ENCODE measurements at regions of chr11 and their contacts with region 1.

Region 1: GRCh38 chr11:8964324-8965320 is at the start of gene TMEM9B:
- DNase-seq: peak; percentile 88
- H3K4me3 Mint-ChIP-seq: peak within 1 kb of the TSS; percentile 88
- H3K27ac Mint-ChIP-seq: peak within 1 kb of the TSS; percentile 91
- H3K4me1 Mint-ChIP-seq: peaks cover 32% of the 10 kb centered on the region
- H3K27me3 Mint-ChIP-seq: no peaks in the 10 kb centered on the region
- total RNA-seq, gene TMEM9B: 34.2 to 34.8 TPM

Region 2: DNA sequence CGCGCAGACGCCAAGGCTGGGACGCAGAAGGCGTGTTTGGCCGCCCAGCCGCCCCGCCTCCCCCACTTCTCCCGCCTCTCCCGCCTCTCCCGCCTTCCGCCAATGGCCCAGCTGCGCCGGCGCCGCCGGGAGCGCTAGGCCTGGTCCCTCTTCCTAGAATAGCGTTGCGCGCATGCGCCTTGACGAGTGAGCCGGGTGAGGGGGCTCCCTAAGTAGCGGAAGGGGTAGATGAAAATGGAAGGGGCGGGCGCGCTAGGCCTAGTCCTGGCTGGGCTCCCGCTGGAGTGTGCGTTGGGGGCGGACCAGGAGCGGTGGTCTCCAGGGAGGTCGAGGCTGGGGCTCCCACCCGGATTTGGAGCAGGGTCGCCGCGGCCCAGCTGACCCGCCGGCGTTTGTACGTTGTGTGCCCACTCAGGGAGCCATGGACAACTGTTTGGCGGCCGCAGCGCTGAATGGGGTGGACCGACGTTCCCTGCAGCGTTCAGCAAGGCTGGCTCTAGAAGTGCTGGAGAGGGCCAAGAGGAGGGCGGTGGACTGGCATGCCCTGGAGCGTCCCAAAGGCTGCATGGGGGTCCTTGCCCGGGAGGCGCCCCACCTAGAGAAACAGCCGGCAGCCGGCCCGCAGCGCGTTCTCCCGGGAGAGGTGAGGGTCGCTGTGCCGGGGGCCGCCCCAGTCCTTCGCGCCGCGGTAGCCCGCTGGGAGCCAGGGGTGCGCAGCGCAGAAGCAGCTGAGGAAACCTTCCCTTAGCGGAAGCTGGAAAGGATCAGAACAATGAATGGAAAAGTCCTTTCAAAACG is 53.4 kb before region 1 on chr11 and contains the start of gene AKIP1:
- CTCF ChIA-PET with region 1: interaction called, 119 read pairs
- POLR2A ChIA-PET with region 1: interaction called, 20 read pairs
- DNase-seq: peak; percentile 84
- H3K4me3 Mint-ChIP-seq: peak within 1 kb of the TSS; percentile 94
- H3K27ac Mint-ChIP-seq: peak within 1 kb of the TSS; percentile 84
- H3K4me1 Mint-ChIP-seq: peaks cover 51% of the 10 kb centered on the region
- H3K27me3 Mint-ChIP-seq: peaks cover 6% of the 10 kb centered on the region
- total RNA-seq, gene AKIP1: 36.0 to 38.1 TPM

Region 3: GRCh38 chr11:8948886-8949285 is 15.7 kb before region 1 on chr11:
- CTCF ChIA-PET with region 1: interaction called, 14 read pairs
- POLR2A ChIA-PET with region 1: interaction called, 5 read pairs
- DNase-seq: no peak
- H3K4me3 Mint-ChIP-seq: no peak overlapping the region
- H3K27ac Mint-ChIP-seq: no peak overlapping the region
- H3K4me1 Mint-ChIP-seq: peaks cover 7% of the 10 kb centered on the region
- H3K27me3 Mint-ChIP-seq: peaks cover 3% of the 10 kb centered on the region

Region 4: DNA sequence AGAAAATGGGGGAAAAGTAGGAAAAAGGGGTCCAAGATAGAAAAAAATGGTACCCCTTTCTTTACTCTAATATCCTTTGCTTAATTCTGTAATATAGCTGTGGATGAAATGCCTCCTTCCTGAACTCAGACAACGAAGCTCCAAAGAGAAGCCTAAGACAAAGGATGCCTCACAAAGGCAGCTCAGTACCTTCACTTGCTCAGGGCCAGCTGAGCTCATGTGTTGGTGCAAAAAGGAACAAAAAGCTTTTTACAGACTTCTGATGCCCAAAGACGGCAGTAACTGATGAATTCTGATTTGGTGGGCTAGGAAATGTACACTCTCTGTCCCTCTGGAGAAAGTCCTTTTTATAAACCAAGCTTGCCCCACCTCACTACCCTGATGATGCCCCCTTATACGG is 223.0 kb after region 1 on chr11:
- CTCF ChIA-PET with region 1: no interaction called
- POLR2A ChIA-PET with region 1: no interaction called
- DNase-seq: no peak
- H3K4me3 Mint-ChIP-seq: no peak overlapping the region
- H3K27ac Mint-ChIP-seq: no peak overlapping the region
- H3K4me1 Mint-ChIP-seq: no peaks in the 10 kb centered on the region
- H3K27me3 Mint-ChIP-seq: no peaks in the 10 kb centered on the region

Measured in activated CD4-positive, alpha-beta memory T cell treated with anti-CD3 and anti-CD28 coated beads, Interleukin-2, amount 10 ng/mL, durations not matched to agents 7 days and 5 days (primary cell).